ENCODE measurements at regions of chr9 and their contacts with region 1.

Region 1: GRCh38 chr9:34500623-34501267 is 22.0 kb downstream of the ENHO start:
- DNase-seq: peak; percentile 48 to 83 (median 68)
- H3K4me3 ChIP-seq: no peak overlapping the region
- H3K27ac ChIP-seq: peak overlapping the region in 20 of 59 donors; percentile 69 to 90 (median 86)
- H3K27me3 ChIP-seq: no peaks in the 10 kb centered on the region
- CTCF ChIP-seq: peak; percentile 94 to 100 (median 99)

Region 2: GRCh38 chr9:34328987-34329832 is 171.5 kb before region 1 on chr9 and contains the starts of genes KIF24 and NUDT2:
- intact Hi-C with region 1: loop called (anchors 5 kb)
- DNase-seq: peak; percentile 95 to 99 (median 98)
- H3K4me3 ChIP-seq: peak within 1 kb of the TSS; percentile 60 to 99 (median 85)
- H3K27ac ChIP-seq: peak within 1 kb of the TSS; percentile 80 to 98 (median 93)
- H3K27me3 ChIP-seq: no peaks in the 10 kb centered on the region
- CTCF ChIP-seq: peak in 29 of 56 donors; percentile 4 to 51 (median 19)
- total RNA-seq, gene KIF24: 0.61 to 3.8 (median 1.6) TPM
- total RNA-seq, gene NUDT2: 9.9 to 32.0 (median 20.6) TPM

Region 3: DNA sequence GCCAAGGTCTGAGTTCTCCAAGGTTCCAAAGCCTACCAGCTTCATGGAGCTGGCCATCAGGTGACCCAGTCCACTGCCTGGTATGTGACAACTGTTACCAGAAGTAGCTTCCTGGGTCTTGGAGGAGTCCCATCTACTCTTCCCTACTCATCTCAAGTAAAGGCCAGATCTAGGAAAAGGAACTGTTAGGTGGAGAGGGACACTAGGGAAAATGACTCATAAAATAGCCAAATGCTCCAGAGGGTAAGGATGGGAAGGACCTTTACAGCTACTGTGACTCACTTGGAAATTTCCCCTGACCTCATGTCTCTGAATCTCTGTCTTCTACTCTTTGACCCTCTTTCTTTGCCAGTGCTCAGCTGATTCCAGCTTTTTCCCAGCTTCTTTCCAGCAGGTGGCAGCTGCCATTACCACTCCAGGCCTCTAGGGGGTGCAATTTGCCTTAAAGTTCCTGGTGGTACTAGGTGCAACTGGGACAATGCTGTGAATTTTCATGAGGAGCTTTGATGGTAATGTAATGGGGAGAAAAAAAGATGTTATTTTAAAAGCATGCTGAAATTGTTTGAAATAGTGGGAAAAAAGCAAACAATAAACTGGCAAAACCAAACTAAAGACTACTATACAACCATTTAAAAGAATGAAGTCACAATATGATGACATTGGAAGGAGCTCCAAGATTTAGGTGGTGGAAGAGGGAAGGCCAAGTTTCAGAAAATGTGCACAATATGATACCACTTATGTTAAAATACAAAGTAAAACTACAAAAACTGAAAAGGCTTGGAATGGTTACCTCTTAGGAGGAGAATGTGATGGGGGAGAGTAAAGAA is 97.0 kb before region 1 on chr9:
- intact Hi-C with region 1: loop called (anchors 1 to 5 kb)
- DNase-seq: peak; percentile 67 to 87 (median 75)
- H3K4me3 ChIP-seq: no peak overlapping the region
- H3K27ac ChIP-seq: peak overlapping the region in 1 of 59 donors; percentile 4
- H3K27me3 ChIP-seq: no peaks in the 10 kb centered on the region
- CTCF ChIP-seq: peak; percentile 83 to 100 (median 98)

Region 4: GRCh38 chr9:34437006-34437925 is 63.5 kb before region 1 on chr9:
- intact Hi-C with region 1: loop called in 1 of 2 experiments (anchors 1 kb)
- DNase-seq: peak in 6 of 10 donors; percentile 38 to 70 (median 42)
- H3K4me3 ChIP-seq: no peak overlapping the region
- H3K27ac ChIP-seq: peak overlapping the region in 3 of 59 donors; percentile 25 to 79 (median 60)
- H3K27me3 ChIP-seq: no peaks in the 10 kb centered on the region
- CTCF ChIP-seq: peak in 55 of 56 donors; percentile 43 to 84 (median 73)

Region 5: DNA sequence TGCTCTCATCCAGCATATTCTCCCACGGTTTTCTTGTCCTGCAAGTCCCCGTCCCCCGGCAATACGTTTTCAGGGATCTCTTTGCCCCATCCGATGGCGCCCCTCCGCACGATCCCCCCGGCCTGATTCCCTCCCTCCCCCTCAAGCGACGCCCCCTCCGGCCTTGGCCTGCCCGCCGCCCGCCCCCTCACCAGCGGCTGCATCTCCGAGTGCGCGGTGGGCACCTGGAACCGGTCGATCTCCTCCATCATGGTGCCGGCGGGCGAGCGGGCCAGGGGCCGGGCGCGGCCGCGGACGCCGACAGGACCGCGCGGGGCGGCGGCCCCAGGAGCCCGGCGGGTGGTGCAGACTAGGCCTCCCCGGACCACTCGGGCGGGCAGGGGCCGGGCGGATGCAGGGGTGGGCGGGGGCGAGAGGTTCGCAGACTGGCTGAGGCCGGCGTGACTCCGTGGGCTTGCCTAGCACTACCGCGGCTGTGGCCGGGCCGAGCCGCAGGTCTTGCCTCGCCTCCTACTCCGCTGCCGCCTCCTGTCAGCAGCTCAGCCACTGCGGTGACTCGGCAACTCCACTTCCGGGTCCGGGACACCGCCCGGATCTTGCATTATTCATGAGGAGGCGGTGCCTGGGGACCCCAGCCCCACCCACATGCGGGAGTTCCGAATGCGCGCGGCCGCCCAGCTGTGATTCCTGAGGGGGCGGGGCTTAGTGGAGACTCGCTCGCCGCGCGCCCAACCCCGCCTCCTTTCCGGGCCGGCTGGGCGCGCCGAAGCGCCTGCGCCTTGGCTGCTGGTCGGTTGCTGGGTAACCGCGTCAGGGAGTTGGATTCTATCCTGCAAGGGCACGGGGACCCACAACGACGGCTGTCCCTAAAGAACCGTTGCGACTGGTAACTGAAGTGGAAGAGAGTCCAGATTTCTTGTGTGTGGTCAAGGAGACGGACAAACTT is 42.5 kb before region 1 on chr9 and contains the starts of genes DNAI1 and FAM219A:
- intact Hi-C with region 1: loop called (anchors 1 to 5 kb)
- DNase-seq: peak; percentile 98 to 100 (median 99)
- H3K4me3 ChIP-seq: peak within 1 kb of the TSS; percentile 54 to 96 (median 83)
- H3K27ac ChIP-seq: peak within 1 kb of the TSS in 57 of 59 donors; percentile 3 to 92 (median 73)
- H3K27me3 ChIP-seq: no peaks in the 10 kb centered on the region
- CTCF ChIP-seq: peak in 26 of 56 donors; percentile 5 to 58 (median 28)
- total RNA-seq, gene DNAI1: 1.0 to 11.2 (median 4.2) TPM
- total RNA-seq, gene FAM219A: 93.3 to 167 (median 131) TPM

Region 6: GRCh38 chr9:34522971-34523797 is 22.4 kb after region 1 on chr9 and contains the start of gene ENHO:
- intact Hi-C with region 1: loop called (anchors 1 kb)
- DNase-seq: peak; percentile 77 to 95 (median 88)
- H3K4me3 ChIP-seq: peak within 1 kb of the TSS; percentile 41 to 79 (median 68)
- H3K27ac ChIP-seq: peak within 1 kb of the TSS in 57 of 59 donors; percentile 28 to 94 (median 80)
- H3K27me3 ChIP-seq: no peaks in the 10 kb centered on the region
- CTCF ChIP-seq: peak in 26 of 56 donors; percentile 8 to 54 (median 22)
- total RNA-seq, gene ENHO: 56.2 to 336 (median 124) TPM

Region 7: DNA sequence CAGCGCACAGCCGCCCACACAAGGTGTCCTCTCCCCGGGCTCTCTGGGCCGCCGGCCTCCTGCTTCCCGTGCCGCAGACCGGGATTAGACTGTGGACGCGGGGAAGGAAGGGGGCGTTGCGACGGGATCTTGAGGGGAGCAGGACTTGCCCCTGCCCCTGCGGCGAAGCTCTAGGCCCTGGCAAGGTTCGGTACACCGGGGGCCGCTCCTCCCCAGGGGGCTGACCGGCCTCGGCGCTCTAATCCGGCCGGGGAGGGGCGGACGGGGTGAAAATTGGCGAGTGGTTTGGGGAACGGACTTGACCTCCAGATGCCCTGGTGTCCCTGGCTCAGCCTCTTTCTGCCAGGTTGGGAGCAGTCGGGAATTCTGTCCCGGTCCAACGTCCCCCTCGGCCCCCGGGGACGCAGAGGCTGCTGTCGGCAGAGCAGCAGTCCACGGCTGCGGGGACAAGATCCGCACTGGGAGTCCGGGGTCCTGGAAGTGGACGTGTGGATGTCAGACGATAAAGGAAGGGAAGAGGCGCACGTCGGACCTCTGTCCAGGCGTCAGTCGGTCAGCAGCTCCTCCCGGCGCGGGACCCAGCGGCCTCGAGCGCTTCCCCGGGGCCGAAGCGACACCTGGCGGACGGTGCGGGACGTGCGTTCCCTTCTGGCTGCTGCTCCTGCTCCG is 90.6 kb after region 1 on chr9:
- intact Hi-C with region 1: loop called (anchors 2 to 5 kb)
- DNase-seq: peak; percentile 77 to 93 (median 86)
- H3K4me3 ChIP-seq: peak overlapping the region in 49 of 59 donors; percentile 1 to 78 (median 59)
- H3K27ac ChIP-seq: peak overlapping the region in 42 of 59 donors; percentile 6 to 90 (median 80)
- H3K27me3 ChIP-seq: peaks cover 0 to 4% (median 0%) of the 10 kb centered on the region in 45 donors
- CTCF ChIP-seq: peak; percentile 67 to 98 (median 95)